Endothelial cell of umbilical vein (primary cell): ENCODE measurements at regions of chr2 and their contacts with region 1.

Region 1: GRCh38 chr2:38115216-38116032 is 39.5 kb upstream of the CYP1B1 start:
- DNase-seq: peak; percentile 73
- H3K4me3 ChIP-seq: no peak overlapping the region
- H3K27ac ChIP-seq: no peak overlapping the region
- H3K4me1 ChIP-seq: no peaks in the 10 kb centered on the region
- H3K27me3 ChIP-seq: peaks cover 0 to 10% of the 10 kb centered on the region in 2 experiments
- CTCF ChIP-seq: peak; percentile 91 to 98
- POLR2A ChIP-seq: no peak

Region 2: GRCh38 chr2:37993143-37993542 is 122.3 kb before region 1 on chr2:
- CTCF ChIA-PET with region 1: interaction called, 13 read pairs
- POLR2A ChIA-PET with region 1: no interaction called
- dilution Hi-C with region 1: no loop called
- intact Hi-C with region 1: no loop called
- DNase-seq: no peak
- H3K4me3 ChIP-seq: no peak overlapping the region
- H3K27ac ChIP-seq: no peak overlapping the region
- H3K4me1 ChIP-seq: no peaks in the 10 kb centered on the region
- H3K27me3 ChIP-seq: no peaks in the 10 kb centered on the region
- CTCF ChIP-seq: no peak
- POLR2A ChIP-seq: no peak

Region 3: GRCh38 chr2:38146275-38146906 is 31.0 kb after region 1 on chr2:
- CTCF ChIA-PET with region 1: interaction called, 5 read pairs
- POLR2A ChIA-PET with region 1: no interaction called
- dilution Hi-C with region 1: no loop called
- intact Hi-C with region 1: loop called (anchors 1 kb)
- DNase-seq: peak; percentile 65
- H3K4me3 ChIP-seq: peak overlapping the region in 1 of 3 experiments; percentile 5
- H3K27ac ChIP-seq: peak overlapping the region; percentile 93
- H3K4me1 ChIP-seq: peaks cover 15% of the 10 kb centered on the region
- H3K27me3 ChIP-seq: no peaks in the 10 kb centered on the region
- CTCF ChIP-seq: no peak
- POLR2A ChIP-seq: no peak

Region 4: DNA sequence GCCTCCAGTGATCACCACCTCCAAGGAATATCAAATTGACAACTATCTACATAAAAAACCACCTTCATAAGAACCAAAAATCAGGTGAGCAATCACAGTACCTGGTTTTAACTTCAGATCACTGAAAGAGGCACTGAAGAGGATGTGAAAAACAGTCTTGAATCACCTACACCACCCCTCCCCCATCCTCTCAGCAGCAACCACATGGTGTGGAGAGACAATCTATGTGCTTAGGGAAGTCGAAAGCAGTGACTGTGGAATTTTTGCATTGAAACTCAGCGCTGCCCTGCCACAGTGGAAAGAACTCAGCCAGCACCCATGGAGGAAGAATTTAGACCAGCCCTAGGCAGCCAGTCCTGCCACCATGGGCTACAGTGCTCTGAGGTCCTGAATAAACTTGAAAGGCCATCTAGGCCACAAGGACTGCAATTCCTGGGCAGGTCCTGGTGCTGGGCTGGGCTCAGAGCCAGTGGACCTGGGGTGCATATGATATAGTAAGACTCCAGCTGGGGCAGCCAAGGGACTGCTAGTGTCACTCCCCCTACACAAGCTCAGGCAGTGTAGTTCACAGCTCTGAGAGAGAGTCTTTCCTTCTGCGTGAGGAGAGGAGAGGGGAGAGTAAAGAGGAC is 186.0 kb after region 1 on chr2:
- CTCF ChIA-PET with region 1: no interaction called
- POLR2A ChIA-PET with region 1: no interaction called
- dilution Hi-C with region 1: no loop called
- intact Hi-C with region 1: no loop called
- DNase-seq: no peak
- H3K4me3 ChIP-seq: no peak overlapping the region
- H3K27ac ChIP-seq: no peak overlapping the region
- H3K4me1 ChIP-seq: no peaks in the 10 kb centered on the region
- H3K27me3 ChIP-seq: no peaks in the 10 kb centered on the region
- CTCF ChIP-seq: no peak
- POLR2A ChIP-seq: no peak